ENCODE measurements at regions of chr14 and their contacts with region 1.

Region 1: GRCh38 chr14:45679852-45680251 is 426.9 kb upstream of the MIS18BP1 start:
- DNase-seq: no peak
- H3K4me3 ChIP-seq: no peak overlapping the region
- H3K27ac ChIP-seq: peak overlapping the region in 1 of 4 donors; percentile 38
- H3K4me1 ChIP-seq: peaks cover 0 to 23% (median 7%) of the 10 kb centered on the region in 4 donors
- H3K27me3 ChIP-seq: no peaks in the 10 kb centered on the region
- CTCF ChIP-seq: no peak
- EP300 ChIP-seq: no peak
- POLR2A ChIP-seq: no peak

Region 2: GRCh38 chr14:46259536-46259935 is 579.7 kb after region 1 on chr14:
- intact Hi-C with region 1: loop called (anchors 5 kb)
- DNase-seq: no peak
- H3K4me3 ChIP-seq: no peak overlapping the region
- H3K27ac ChIP-seq: no peak overlapping the region
- H3K4me1 ChIP-seq: no peaks in the 10 kb centered on the region
- H3K27me3 ChIP-seq: no peaks in the 10 kb centered on the region
- CTCF ChIP-seq: no peak
- EP300 ChIP-seq: no peak
- POLR2A ChIP-seq: no peak

Measured in sigmoid colon (tissue), 7 donors.